Activated T-helper 1 cell treated with anti-CD3 and anti-CD28 coated beads, Interleukin-12 subunit alpha, Interleukin-12 subunit beta, Interleukin-2, Interleukin-4 antibody, amounts not matched to agents 30 ng/mL and 10 ng/mL and 1 ng/mL, durations not matched to agents 14 hours and 24 hours and 36 hours (primary cell): ENCODE measurements at regions of chr9 and their contacts with region 1.

Region 1: DNA sequence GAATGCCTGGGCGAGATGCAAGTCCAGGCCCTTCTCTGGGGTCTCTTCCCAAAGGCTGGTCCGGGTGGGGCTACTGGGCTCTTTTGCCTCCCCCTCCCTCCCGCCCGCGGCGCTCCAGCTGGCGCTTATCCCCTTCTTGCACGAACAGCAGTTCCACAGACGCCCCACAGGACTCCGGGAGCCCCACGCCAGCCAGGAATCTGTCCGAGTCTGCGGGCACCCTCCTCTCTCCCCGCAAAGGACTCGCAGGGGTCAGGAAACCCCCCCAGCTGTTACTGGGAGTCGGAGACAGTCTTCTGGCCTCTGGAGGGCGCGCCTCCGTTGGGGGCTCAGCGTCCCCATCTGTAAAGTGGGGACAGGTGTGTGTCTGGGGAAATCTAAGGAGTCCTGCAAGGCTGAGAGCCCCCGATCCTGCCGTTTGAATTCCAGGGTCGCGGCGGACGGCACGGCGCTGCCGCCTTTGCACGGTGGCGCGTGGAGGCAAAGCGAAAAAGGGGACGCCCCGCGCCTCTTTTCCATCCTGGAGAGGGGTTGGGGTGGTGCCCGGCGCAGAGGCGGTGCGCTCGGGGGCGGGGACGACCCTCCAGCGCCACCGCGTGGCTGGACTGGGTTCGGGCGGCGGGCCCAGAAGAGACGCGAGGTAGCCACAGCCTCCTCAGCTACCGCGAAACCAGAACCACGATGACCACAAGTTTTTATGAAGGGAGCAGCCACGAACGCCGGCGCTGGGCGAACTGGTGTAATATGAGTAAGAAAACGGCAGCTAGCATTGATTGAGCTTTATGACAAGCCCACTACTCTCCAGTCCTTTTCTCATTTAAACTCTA is 2.9 kb upstream of the CCIN start:
- DNase-seq: peak; percentile 83
- H3K4me3 Mint-ChIP-seq: peak overlapping the region; percentile 72
- H3K27ac Mint-ChIP-seq: no peak overlapping the region
- H3K4me1 Mint-ChIP-seq: peaks cover 9% of the 10 kb centered on the region
- H3K27me3 Mint-ChIP-seq: peaks cover 21% of the 10 kb centered on the region

Region 2: GRCh38 chr9:35954942-35955546 is 211.3 kb before region 1 on chr9:
- intact Hi-C with region 1: loop called (anchors 1 kb)
- DNase-seq: peak; percentile 25
- H3K4me3 Mint-ChIP-seq: no peak overlapping the region
- H3K27ac Mint-ChIP-seq: no peak overlapping the region
- H3K4me1 Mint-ChIP-seq: peaks cover 6% of the 10 kb centered on the region
- H3K27me3 Mint-ChIP-seq: peaks cover 30% of the 10 kb centered on the region

Region 3: GRCh38 chr9:36008774-36009300 is 157.5 kb before region 1 on chr9:
- intact Hi-C with region 1: loop called (anchors 1 kb)
- DNase-seq: peak; percentile 42
- H3K4me3 Mint-ChIP-seq: no peak overlapping the region
- H3K27ac Mint-ChIP-seq: no peak overlapping the region
- H3K4me1 Mint-ChIP-seq: peaks cover 14% of the 10 kb centered on the region
- H3K27me3 Mint-ChIP-seq: peaks cover 19% of the 10 kb centered on the region

Region 4: DNA sequence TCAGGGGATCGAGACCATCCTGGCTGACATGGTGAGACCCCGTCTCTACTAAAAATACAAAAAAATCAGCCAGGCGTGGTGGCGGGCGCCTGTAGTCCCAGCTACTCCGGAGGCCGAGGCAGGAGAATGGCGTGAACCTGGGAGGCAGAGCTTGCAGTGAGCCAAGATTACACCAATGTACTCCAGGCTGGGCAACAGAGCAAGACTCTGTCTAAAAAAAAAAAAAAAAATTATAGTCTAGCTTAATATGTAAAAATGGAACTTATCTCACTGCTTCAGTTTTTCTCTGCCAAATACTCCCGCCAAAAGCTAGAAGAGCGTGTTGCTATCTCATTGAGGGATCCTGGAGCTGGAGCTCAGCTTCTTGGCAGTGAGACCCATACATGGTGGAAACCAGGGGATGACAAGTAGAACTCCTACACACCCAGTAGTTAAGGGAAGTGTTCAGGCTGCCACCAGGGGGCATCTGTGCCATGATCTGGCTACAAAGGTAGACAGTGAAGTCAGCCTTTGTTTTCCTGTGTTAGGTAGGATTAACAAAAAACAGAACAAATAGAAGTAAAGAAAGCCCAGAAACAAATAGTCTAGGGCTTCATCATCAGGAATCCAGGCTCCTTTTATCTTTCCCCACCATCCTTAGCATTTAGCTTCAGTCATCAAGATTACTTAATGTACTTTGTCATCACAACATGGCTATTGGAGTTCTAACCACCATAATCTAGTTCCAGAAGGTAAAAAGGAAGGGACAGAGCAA is 63.4 kb before region 1 on chr9:
- intact Hi-C with region 1: loop called (anchors 1 kb)
- DNase-seq: peak; percentile 75
- H3K4me3 Mint-ChIP-seq: no peak overlapping the region
- H3K27ac Mint-ChIP-seq: no peak overlapping the region
- H3K4me1 Mint-ChIP-seq: peaks cover 8% of the 10 kb centered on the region
- H3K27me3 Mint-ChIP-seq: peaks cover 2% of the 10 kb centered on the region

Region 5: GRCh38 chr9:36136272-36136893 is 29.9 kb before region 1 on chr9 and contains the start of gene GLIPR2:
- intact Hi-C with region 1: loop called (anchors 1 kb)
- DNase-seq: peak; percentile 81
- H3K4me3 Mint-ChIP-seq: peak within 1 kb of the TSS; percentile 93
- H3K27ac Mint-ChIP-seq: peak within 1 kb of the TSS; percentile 83
- H3K4me1 Mint-ChIP-seq: peaks cover 50% of the 10 kb centered on the region
- H3K27me3 Mint-ChIP-seq: peaks cover 20% of the 10 kb centered on the region
- total RNA-seq, gene GLIPR2: 26.3 and 27.5 TPM in 2 replicates

Region 6: DNA sequence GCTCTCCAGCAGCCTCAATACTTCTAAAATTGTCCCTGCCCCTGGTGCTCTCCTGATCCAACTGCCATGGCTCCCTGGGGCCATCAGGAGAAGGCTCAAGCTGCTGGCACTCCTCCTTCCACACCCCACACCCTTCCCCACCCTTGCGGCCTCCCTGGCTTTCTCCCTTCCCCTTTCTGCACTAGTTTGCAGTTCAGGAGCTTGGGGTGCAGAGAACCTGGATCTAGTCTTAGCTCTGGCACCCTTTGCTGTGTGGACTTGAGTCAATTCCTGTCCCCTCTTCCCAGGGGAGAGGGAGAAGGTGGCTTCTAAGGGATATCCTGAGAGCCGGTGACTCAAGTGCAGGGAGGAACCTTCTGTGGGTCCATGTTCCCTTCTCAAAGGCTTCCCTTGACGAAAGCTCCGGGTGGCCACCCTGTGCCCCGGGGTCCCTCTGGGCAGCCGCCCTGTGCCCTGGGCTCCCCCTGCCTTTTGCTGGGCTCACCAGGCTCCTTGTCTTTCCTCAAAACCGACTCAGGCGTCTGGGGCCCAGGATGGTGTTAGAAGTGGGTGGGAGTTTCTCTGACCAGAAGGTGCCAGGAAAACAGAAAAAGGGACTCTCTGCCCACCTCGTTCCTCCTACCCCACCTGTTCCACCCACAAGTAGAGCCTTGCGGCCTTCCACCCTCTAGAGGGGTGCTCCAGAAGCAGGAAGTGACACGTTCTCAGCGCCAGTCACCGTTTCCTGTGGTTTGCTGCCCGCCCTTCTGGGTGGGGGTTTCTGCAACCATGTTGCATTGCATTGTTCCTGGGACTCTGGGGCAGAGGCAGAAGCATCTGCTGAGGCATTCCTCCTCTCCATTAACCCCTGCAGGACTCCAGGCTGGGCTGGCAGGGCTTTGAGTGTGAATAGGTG is 14.8 kb before region 1 on chr9:
- intact Hi-C with region 1: loop called (anchors 1 kb)
- DNase-seq: peak; percentile 84
- H3K4me3 Mint-ChIP-seq: peak overlapping the region; percentile 77
- H3K27ac Mint-ChIP-seq: peak overlapping the region; percentile 96
- H3K4me1 Mint-ChIP-seq: peaks cover 64% of the 10 kb centered on the region
- H3K27me3 Mint-ChIP-seq: no peaks in the 10 kb centered on the region

Region 7: DNA sequence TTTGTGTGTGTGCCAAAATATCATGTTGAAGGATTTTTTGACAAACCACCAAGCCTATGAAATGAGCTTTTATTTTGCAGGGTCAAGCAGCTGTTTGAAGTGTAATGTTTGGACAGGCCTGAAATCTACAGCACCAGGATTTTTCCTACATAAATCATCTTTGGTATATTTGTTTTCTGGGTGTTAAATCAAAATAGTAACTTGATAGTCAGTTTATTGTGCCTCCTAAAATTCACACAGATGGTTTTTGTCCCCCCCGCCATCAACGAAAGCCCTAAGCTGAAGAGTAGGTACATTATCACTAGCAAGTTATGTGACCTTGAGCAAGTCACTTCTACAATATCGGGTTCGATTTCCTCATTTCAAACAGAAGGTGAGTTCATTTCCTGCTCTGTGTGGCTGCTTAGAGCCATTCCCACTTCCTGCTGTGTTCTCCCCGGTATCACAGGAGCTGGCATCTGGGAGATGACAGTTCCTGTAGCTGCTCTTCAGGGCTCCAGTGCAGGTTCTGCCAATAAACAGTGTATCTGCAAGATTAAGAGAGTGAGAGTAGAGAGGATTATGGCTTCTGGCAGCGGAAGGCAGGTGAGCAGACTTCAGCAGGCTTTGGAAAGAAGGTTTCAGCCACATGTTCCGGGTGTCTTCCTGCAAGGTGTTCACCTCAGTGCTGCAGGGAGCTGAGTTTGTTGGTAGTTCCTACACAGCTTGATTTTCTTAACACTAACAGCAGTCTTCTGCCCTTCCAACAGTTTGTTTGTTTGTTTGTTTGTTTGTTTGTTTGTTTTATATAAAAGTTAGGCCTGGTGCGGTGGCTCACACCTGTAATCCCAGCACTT is 140.4 kb after region 1 on chr9:
- intact Hi-C with region 1: no loop called
- DNase-seq: no peak
- H3K4me3 Mint-ChIP-seq: no peak overlapping the region
- H3K27ac Mint-ChIP-seq: no peak overlapping the region
- H3K4me1 Mint-ChIP-seq: peaks cover 7% of the 10 kb centered on the region
- H3K27me3 Mint-ChIP-seq: no peaks in the 10 kb centered on the region